ENCODE measurements at regions of chr2 and their contacts with region 1.

Region 1: DNA sequence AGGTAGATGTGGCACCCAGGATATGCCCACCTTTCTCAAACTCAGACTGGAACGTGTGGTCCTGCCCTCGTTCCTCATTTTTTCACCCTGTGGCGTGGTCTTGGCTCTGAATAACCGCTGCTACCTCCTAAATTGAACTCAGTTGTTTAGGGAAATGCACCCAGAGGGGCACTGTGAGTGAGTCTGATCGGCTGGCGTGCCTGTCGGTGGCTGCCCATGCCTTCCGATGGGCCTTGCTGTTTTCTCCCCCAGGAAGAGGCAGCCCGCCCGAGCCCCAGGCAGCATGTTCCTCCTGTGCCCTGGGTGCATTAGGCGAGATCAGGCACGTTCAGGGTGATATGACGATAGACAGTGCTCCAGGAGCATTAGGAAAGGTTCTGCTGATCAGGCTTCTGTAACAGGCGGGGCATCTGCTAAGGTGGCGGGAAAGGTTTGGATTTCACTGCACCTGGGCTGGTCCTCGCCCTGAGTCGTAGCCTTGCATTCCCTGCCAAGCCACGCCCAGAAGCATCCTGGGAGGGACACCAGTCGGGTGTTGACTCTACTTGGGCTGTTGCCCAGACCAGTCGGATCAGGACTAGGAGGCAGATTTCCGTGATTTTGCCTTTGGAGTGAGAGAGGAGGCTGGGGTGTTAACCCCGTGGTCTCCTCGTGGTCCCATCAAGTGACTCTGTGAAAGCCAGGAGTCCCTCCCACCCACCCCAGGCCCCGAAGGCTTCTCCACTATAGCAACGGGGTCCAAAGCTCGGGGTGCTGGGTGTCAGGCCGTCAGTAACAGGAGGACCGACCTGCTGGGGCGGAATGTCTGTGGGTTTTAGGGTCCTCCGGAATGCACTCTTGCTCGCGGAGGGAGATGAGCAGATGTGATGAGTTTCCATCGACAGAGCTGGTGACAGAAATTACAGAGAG is 75.1 kb downstream of the SH3BP4 start:
- DNase-seq: peak; percentile 85 to 93
- H3K4me3 ChIP-seq: no peak overlapping the region
- CTCF ChIP-seq: no peak
- POLR2A ChIP-seq: no peak

Region 2: DNA sequence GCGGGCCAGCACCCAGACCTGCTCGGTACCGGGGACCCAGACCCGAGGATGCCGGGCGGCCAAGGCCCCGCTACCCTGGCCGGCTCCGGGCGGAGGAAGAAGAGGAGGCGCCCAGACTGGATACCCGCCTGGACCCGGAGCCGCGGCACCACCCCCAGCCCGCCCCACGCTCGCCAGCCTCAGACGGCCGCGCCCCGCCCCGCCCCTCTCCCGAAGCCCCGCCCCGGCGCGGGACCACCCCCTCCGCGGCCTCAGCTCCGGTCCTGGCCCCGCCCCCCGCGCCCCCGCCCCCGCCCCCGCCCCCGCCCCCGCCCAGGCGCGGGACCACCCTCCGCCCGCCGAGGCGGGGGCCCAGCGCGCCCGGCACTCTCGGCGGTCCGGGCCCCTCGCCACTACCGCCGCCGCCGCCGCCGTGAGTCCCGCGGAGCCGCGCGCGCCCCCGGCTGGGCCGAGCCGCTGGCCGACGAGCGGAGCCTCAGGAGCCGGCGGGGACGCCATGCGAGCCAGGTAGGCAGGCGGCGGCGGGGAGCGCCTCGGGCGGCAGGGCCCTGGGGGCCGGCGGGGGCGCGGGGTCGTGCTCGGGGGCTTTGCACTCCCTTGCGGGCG is 75.1 kb before region 1 on chr2 and contains the start of gene SH3BP4:
- intact Hi-C with region 1: loop called (anchors 10 kb)
- DNase-seq: peak; percentile 64 to 97
- H3K4me3 ChIP-seq: peak within 1 kb of the TSS; percentile 73
- CTCF ChIP-seq: no peak
- POLR2A ChIP-seq: no peak
- total RNA-seq, gene SH3BP4: 29.1 to 57.8 (median 42.6) TPM